ENCODE measurements at regions of chr9 and their contacts with region 1.

Region 1: GRCh38 chr9:76658535-76659231 is 105.6 kb upstream of the PCA3 start:
- DNase-seq: no peak
- H3K4me3 Mint-ChIP-seq: no peak overlapping the region
- H3K27ac Mint-ChIP-seq: no peak overlapping the region
- H3K4me1 Mint-ChIP-seq: peaks cover 5% of the 10 kb centered on the region
- H3K27me3 Mint-ChIP-seq: peaks cover 3% of the 10 kb centered on the region

Region 2: GRCh38 chr9:76271755-76272154 is 386.9 kb before region 1 on chr9:
- CTCF ChIA-PET with region 1: no interaction called
- intact Hi-C with region 1: no loop called
- DNase-seq: no peak
- H3K4me3 Mint-ChIP-seq: no peak overlapping the region
- H3K27ac Mint-ChIP-seq: no peak overlapping the region
- H3K4me1 Mint-ChIP-seq: no peaks in the 10 kb centered on the region
- H3K27me3 Mint-ChIP-seq: no peaks in the 10 kb centered on the region

Region 3: GRCh38 chr9:76458903-76459690 is 199.6 kb before region 1 on chr9 and contains the start of gene GCNT1:
- CTCF ChIA-PET with region 1: interaction called, 6 read pairs
- intact Hi-C with region 1: loop called (anchors 1 kb)
- DNase-seq: peak; percentile 89
- H3K4me3 Mint-ChIP-seq: peak within 1 kb of the TSS; percentile 90
- H3K27ac Mint-ChIP-seq: no peak within 1 kb of the TSS
- H3K4me1 Mint-ChIP-seq: peaks cover 12% of the 10 kb centered on the region
- H3K27me3 Mint-ChIP-seq: peaks cover 8% of the 10 kb centered on the region
- total RNA-seq, gene GCNT1: 0.48 to 0.54 TPM

Region 4: DNA sequence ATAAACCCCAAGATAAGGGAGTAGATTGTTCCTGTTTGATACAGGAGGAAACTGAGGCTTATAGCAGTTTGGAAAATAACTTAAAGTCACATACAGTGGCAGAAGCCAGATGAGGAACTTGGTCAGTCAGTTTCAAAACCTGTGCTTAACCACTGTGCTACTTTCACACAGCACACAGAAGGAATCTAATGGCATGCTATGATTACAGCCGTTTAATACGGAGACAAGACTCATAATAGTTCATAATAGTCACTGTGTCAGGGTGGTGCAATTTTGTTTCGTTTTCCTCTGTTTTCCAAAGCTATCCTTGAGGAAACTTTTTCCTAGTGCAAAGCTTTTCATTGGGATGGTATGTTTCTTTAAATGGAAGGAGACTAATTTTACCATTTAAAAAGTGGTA is 87.4 kb before region 1 on chr9:
- CTCF ChIA-PET with region 1: no interaction called
- intact Hi-C with region 1: no loop called
- DNase-seq: no peak
- H3K4me3 Mint-ChIP-seq: peak overlapping the region; percentile 51
- H3K27ac Mint-ChIP-seq: no peak overlapping the region
- H3K4me1 Mint-ChIP-seq: peaks cover 11% of the 10 kb centered on the region
- H3K27me3 Mint-ChIP-seq: peaks cover 61% of the 10 kb centered on the region

Region 5: DNA sequence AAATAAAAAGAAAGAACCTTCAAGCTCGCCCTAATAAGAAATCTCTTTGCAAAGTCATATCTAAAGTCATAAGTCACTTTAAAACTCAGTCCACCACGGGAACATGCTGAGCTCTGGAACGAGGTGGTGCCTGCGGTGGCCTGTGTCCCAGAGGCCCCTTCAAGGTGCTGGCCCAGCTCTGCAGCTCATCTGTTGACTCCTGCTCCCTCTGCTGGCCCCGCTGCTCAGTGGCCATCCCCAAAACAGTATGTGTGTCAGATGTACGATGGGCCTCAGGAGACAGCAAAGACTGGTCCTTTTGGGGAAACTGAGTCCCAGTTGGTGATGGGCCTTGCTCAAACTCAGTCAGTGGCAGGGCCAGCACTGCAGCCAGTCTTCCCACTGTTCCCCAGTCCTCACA is 338.0 kb after region 1 on chr9:
- CTCF ChIA-PET with region 1: no interaction called
- intact Hi-C with region 1: loop called (anchors 10 kb)
- DNase-seq: peak; percentile 35
- H3K4me3 Mint-ChIP-seq: no peak overlapping the region
- H3K27ac Mint-ChIP-seq: no peak overlapping the region
- H3K4me1 Mint-ChIP-seq: no peaks in the 10 kb centered on the region
- H3K27me3 Mint-ChIP-seq: peaks cover 10% of the 10 kb centered on the region